ENCODE measurements at regions of chr2 and their contacts with region 1.

Region 1: GRCh38 chr2:81786811-81787210 is 1482.3 kb upstream of the LRRTM1 start:
- DNase-seq: no peak
- H3K4me3 ChIP-seq: no peak overlapping the region
- H3K27ac ChIP-seq: no peak overlapping the region
- H3K4me1 ChIP-seq: no peaks in the 10 kb centered on the region
- H3K27me3 ChIP-seq: no peaks in the 10 kb centered on the region
- CTCF ChIP-seq: no peak

Region 2: DNA sequence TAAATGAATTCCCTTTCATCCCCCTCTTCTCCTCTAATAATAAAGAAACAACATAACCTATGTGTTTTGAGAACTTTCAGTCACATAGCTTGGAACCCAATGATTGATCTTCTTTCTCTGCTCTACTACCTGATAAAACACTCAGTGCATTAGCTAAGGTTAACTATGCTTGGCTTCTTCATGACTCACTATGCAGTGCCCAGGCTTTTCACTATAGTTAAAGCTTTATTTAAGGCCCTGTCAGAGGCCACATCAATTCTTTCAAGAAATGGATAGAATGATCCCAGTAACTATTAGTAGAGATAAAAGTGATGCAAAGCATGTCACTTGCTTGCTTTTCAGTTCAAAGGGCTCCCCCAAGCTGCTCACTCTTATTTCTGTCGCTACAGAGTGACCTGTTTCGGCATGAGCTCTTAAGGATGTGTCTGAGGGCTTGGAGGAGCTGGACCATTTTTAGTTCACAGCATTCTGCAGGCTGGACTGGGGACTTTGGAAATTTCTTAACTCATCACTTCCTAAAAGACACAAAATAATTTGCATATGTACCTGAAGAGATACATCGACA is 1866.2 kb before region 1 on chr2:
- intact Hi-C with region 1: loop called (anchors 10 kb)
- DNase-seq: no peak
- H3K4me3 ChIP-seq: no peak overlapping the region
- H3K27ac ChIP-seq: no peak overlapping the region
- H3K4me1 ChIP-seq: no peaks in the 10 kb centered on the region
- H3K27me3 ChIP-seq: peaks cover 15% of the 10 kb centered on the region
- CTCF ChIP-seq: no peak